ENCODE measurements at regions of chr2 and their contacts with region 1.

Region 1: DNA sequence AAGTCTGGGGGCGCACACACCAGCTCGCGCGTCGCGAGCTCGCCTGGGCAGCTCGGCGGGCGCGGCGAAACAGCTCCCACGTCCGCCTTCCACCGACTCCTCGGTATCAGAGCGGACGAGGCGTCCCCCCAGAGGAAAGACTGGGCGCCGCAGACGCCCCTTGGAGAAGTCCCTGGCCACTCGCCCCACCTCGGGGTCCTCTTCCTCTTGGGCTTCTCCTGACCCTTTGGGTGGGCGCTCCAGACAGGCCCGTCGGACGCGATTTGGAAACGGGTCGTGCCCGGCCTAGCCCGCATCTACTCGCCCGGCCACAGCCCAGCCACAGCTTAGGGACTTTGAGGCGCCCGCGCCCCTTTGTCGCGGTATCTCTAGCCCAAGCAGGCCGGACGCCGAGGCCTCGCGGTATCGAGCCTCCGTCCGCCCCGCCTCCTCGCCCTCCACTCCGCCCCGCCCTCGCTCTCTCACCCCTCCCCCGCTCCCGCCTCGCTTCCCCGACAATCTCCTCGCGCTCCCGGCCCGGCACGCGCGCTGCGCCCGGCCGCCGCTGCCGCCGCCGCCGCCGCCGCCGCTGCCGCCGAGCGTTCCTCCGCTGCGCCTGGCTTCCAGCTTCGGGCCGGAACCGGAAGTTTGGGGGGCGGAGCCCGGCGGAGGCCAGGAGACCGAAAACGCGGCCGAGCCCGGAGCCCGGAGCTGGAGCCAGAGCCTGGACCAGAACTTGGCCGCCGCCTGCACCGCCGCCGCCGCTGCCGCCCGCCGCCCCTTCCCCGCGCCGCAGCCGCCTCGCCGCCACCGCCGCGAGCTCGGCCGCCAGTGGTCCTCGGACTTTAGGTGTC is 749 bp upstream of the ACVR2A start:
- DNase-seq: peak; percentile 89
- H3K4me3 Mint-ChIP-seq: peak overlapping the region; percentile 88
- H3K27ac Mint-ChIP-seq: peak overlapping the region; percentile 68
- H3K4me1 Mint-ChIP-seq: peaks cover 33% of the 10 kb centered on the region
- H3K27me3 Mint-ChIP-seq: peaks cover 12% of the 10 kb centered on the region

Region 2: DNA sequence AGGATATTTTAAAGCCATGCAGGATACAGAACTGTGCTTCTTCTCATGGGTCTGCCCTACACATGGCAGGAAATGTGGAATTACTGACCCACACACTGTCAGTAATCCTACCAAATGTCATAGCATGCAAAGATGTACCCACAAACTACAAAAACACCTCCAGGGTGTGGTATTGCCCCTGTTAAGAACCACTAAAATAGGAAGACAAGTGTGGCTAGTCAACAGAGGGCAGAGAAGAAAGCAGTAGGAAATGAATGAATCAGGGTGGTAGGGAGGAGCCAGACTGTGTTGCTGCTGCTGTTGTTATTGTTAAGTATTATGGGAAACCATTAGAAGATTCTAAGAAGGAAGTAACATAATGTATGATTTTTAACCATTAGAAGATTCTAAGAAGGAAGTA is 555.9 kb before region 1 on chr2:
- CTCF ChIA-PET with region 1: no interaction called
- intact Hi-C with region 1: loop called (anchors 2 kb)
- DNase-seq: peak; percentile 45
- H3K4me3 Mint-ChIP-seq: no peak overlapping the region
- H3K27ac Mint-ChIP-seq: peak overlapping the region; percentile 78
- H3K4me1 Mint-ChIP-seq: peaks cover 24% of the 10 kb centered on the region
- H3K27me3 Mint-ChIP-seq: no peaks in the 10 kb centered on the region

Region 3: DNA sequence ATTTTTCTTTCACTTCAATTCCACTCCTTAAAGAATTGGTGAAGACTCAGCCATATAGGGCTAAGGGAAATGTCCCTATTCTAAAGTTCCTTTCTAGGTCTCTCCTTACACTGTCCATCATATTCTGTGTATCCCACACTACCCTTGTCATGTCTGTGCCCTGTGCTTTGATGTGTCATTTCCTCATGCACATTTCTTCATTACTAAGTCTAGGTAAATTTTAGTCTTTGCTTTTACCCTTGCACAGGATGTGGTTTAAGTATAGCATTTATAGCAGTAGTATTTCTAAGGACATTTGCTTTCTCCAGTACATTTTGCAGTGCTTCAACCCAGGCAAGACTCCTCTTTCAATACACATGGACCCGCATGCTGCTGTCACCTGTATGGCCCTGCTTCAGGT is 220.8 kb before region 1 on chr2:
- CTCF ChIA-PET with region 1: no interaction called
- intact Hi-C with region 1: loop called (anchors 1 kb)
- DNase-seq: peak; percentile 44
- H3K4me3 Mint-ChIP-seq: no peak overlapping the region
- H3K27ac Mint-ChIP-seq: peak overlapping the region; percentile 79
- H3K4me1 Mint-ChIP-seq: peaks cover 43% of the 10 kb centered on the region
- H3K27me3 Mint-ChIP-seq: no peaks in the 10 kb centered on the region

Region 4: DNA sequence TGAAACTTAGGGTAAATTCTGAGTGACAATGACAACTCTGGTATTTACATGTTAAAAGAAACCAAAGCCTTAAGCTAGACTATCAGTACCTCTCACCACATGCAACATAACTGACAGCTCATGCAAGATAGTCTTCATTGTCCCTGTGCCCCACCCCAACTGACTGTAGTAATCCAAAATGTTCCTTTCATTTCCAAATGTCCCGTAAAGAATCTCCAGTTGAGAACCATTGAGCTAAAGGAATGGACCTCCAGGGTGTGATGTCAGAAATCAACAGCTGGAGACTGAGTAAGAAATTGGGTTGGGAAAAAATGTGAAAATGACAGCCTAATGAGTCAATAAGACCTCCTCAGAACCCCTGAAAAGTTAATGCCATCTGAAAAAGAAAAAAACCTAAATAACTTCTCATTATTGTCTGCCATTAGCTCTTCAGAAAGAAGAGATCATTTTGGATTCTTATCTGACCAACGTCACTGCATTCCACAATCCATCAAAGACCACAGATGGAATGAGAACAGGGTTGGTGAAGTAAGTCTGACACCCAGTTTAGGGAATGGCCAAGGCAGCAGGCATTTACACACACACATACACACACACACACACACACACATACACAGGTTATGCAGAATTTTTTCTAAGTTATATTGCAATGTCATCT is 51.0 kb before region 1 on chr2:
- CTCF ChIA-PET with region 1: no interaction called
- intact Hi-C with region 1: loop called (anchors 2 kb)
- DNase-seq: no peak
- H3K4me3 Mint-ChIP-seq: no peak overlapping the region
- H3K27ac Mint-ChIP-seq: no peak overlapping the region
- H3K4me1 Mint-ChIP-seq: peaks cover 12% of the 10 kb centered on the region
- H3K27me3 Mint-ChIP-seq: no peaks in the 10 kb centered on the region

Region 5: GRCh38 chr2:147910990-147911473 is 67.0 kb after region 1 on chr2:
- CTCF ChIA-PET with region 1: interaction called, 8 read pairs
- intact Hi-C with region 1: loop called (anchors 1 kb)
- DNase-seq: peak; percentile 55
- H3K4me3 Mint-ChIP-seq: no peak overlapping the region
- H3K27ac Mint-ChIP-seq: no peak overlapping the region
- H3K4me1 Mint-ChIP-seq: peaks cover 3% of the 10 kb centered on the region
- H3K27me3 Mint-ChIP-seq: no peaks in the 10 kb centered on the region

Region 6: DNA sequence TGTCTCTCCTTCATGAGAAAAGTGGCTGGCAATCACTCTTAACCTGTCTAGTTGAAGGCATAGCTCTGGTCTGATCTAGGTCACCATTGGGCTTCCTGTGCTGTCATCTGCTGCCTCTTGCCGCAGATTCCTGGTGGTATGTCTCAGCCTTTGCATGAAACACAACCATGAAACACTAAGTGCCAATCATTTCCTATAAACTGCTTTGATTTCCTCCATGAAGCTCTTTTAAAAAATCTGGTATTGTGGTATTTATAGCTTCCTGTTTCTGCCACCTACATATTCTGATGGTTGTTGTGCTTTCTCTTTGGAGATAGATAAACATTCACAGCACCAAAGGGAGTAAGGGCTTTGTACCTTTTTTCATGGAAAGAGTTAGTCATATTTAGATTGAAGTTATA is 680.4 kb after region 1 on chr2:
- CTCF ChIA-PET with region 1: no interaction called
- intact Hi-C with region 1: loop called (anchors 5 kb)
- DNase-seq: peak; percentile 87
- H3K4me3 Mint-ChIP-seq: peak overlapping the region; percentile 14
- H3K27ac Mint-ChIP-seq: peak overlapping the region; percentile 94
- H3K4me1 Mint-ChIP-seq: peaks cover 85% of the 10 kb centered on the region
- H3K27me3 Mint-ChIP-seq: no peaks in the 10 kb centered on the region